Activated naive CD4-positive, alpha-beta T cell treated with anti-CD3 and anti-CD28 coated beads for 36 hours (primary cell): ENCODE measurements at regions of chr7 and their contacts with region 1.

Region 1: GRCh38 chr7:48109848-48110663 is 21.0 kb downstream of the UPP1 start:
- DNase-seq: peak; percentile 96
- H3K4me3 Mint-ChIP-seq: no peak overlapping the region
- H3K27ac Mint-ChIP-seq: no peak overlapping the region
- H3K4me1 Mint-ChIP-seq: peaks cover 9% of the 10 kb centered on the region
- H3K27me3 Mint-ChIP-seq: no peaks in the 10 kb centered on the region

Region 2: DNA sequence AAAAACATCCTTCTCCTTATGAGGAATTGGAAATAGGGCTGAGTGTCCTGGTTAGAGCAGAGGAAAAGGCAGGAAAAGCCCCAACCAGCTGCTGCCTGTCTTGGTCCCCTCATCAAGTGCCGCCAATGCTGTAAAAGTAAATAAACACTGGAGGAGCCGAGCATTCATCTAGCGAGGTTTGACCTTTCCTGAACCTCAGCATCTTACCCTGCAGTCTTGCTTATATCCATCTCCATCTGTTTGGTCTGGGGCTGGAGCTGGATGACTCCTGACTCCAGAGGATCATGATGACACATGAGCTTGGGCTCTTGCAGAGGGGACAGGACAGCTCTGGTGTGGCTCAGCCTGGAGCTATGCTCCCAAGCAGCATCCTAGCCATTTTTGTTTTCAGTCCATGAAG is 1029.2 kb before region 1 on chr7:
- CTCF ChIA-PET with region 1: no interaction called
- intact Hi-C with region 1: no loop called
- DNase-seq: no peak
- H3K4me3 Mint-ChIP-seq: no peak overlapping the region
- H3K27ac Mint-ChIP-seq: no peak overlapping the region
- H3K4me1 Mint-ChIP-seq: no peaks in the 10 kb centered on the region
- H3K27me3 Mint-ChIP-seq: no peaks in the 10 kb centered on the region

Region 3: GRCh38 chr7:47945261-47946001 is 164.6 kb before region 1 on chr7:
- CTCF ChIA-PET with region 1: interaction called, 45 read pairs
- intact Hi-C with region 1: loop called (anchors 1 kb)
- DNase-seq: peak; percentile 88
- H3K4me3 Mint-ChIP-seq: no peak overlapping the region
- H3K27ac Mint-ChIP-seq: no peak overlapping the region
- H3K4me1 Mint-ChIP-seq: no peaks in the 10 kb centered on the region
- H3K27me3 Mint-ChIP-seq: no peaks in the 10 kb centered on the region

Region 4: GRCh38 chr7:48035301-48035966 is 74.6 kb before region 1 on chr7 and contains the start of gene C7orf57:
- CTCF ChIA-PET with region 1: interaction called, 4 read pairs
- intact Hi-C with region 1: loop called (anchors 1 kb)
- DNase-seq: peak; percentile 86
- H3K4me3 Mint-ChIP-seq: peak within 1 kb of the TSS; percentile 77
- H3K27ac Mint-ChIP-seq: no peak within 1 kb of the TSS
- H3K4me1 Mint-ChIP-seq: peaks cover 7% of the 10 kb centered on the region
- H3K27me3 Mint-ChIP-seq: peaks cover 24% of the 10 kb centered on the region
- total RNA-seq, gene C7orf57: 0.29 to 0.44 TPM

Region 5: GRCh38 chr7:48130658-48131108 is 20.6 kb after region 1 on chr7:
- CTCF ChIA-PET with region 1: interaction called, 12 read pairs
- intact Hi-C with region 1: no loop called
- DNase-seq: no peak
- H3K4me3 Mint-ChIP-seq: no peak overlapping the region
- H3K27ac Mint-ChIP-seq: no peak overlapping the region
- H3K4me1 Mint-ChIP-seq: peaks cover 6% of the 10 kb centered on the region
- H3K27me3 Mint-ChIP-seq: peaks cover 11% of the 10 kb centered on the region

Region 6: GRCh38 chr7:48245751-48246472 is 135.9 kb after region 1 on chr7:
- CTCF ChIA-PET with region 1: no interaction called
- intact Hi-C with region 1: no loop called
- DNase-seq: no peak
- H3K4me3 Mint-ChIP-seq: no peak overlapping the region
- H3K27ac Mint-ChIP-seq: no peak overlapping the region
- H3K4me1 Mint-ChIP-seq: no peaks in the 10 kb centered on the region
- H3K27me3 Mint-ChIP-seq: peaks cover 14% of the 10 kb centered on the region